Heart right ventricle (tissue), 16 donors: ENCODE measurements at regions of chr1 and their contacts with region 1.

Region 1: GRCh38 chr1:70764747-70765146 is 282.9 kb downstream of the PTGER3 start:
- DNase-seq: no peak
- ATAC-seq: no peak
- H3K4me3 ChIP-seq: no peak overlapping the region
- H3K27ac ChIP-seq: no peak overlapping the region
- H3K4me1 ChIP-seq: no peaks in the 10 kb centered on the region
- H3K27me3 ChIP-seq: no peaks in the 10 kb centered on the region
- CTCF ChIP-seq: no peak

Region 2: GRCh38 chr1:69271587-69272125 is 1493.1 kb before region 1 on chr1:
- intact Hi-C with region 1: loop called in 1 of 10 experiments (anchors 5 kb)
- DNase-seq: no peak
- ATAC-seq: no peak
- H3K4me3 ChIP-seq: no peak overlapping the region
- H3K27ac ChIP-seq: no peak overlapping the region
- H3K4me1 ChIP-seq: no peaks in the 10 kb centered on the region
- H3K27me3 ChIP-seq: no peaks in the 10 kb centered on the region
- CTCF ChIP-seq: no peak

Region 3: GRCh38 chr1:71196685-71197084 is 431.9 kb after region 1 on chr1:
- intact Hi-C with region 1: no loop called
- DNase-seq: no peak
- ATAC-seq: no peak
- H3K4me3 ChIP-seq: no peak overlapping the region
- H3K27ac ChIP-seq: no peak overlapping the region
- H3K4me1 ChIP-seq: peaks cover 0 to 6% (median 0%) of the 10 kb centered on the region in 9 donors
- H3K27me3 ChIP-seq: no peaks in the 10 kb centered on the region
- CTCF ChIP-seq: peak in 8 of 9 donors; percentile 29 to 65 (median 42)